Posterior cingulate gyrus (tissue), 11 donors: ENCODE measurements at regions of chr16 and their contacts with region 1.

Region 1: DNA sequence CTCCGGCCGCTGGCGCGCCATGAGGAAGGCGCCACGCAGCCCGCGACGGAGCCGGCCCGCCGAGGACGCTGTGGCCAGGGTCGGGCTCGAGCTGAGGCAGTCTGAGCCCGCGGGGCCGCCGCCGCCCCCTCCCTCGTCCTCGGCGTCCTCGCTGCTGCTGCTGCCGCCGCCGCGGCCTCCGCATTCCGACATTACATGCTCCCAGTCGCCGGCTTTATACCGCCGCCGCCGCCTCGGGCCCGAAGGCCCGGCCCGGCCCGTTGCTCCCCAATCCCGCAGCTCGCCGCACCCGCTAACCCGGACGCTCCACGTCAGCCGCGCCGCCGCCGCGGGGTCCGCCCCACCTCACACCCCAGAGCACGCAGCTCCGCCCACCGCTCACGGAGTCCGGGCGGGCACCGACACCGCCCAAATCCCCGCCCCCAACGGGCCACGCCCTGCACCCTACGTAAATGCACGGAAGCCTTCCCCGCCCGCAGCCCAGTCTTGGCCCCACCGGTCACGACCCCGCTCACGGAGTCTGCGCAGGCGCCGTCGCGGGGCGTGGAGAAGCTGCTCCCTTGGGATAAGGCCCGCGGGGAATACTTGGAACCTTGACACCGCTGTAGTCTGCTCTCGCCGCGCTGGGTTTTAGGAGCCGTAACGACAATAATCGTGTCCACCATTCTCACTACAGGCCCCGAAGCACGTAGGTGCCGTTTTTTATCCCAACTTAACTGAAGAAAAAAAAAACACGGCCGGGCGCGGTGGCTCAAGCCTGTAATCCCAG is at the start of gene TXNDC11:
- DNase-seq: peak; percentile 98 to 100 (median 99)

Region 2: GRCh38 chr16:11675561-11676511 is 66.9 kb before region 1 on chr16:
- intact Hi-C with region 1: loop called (anchors 5 kb)
- DNase-seq: peak in 5 of 10 donors; percentile 38 to 93 (median 85)

Region 3: DNA sequence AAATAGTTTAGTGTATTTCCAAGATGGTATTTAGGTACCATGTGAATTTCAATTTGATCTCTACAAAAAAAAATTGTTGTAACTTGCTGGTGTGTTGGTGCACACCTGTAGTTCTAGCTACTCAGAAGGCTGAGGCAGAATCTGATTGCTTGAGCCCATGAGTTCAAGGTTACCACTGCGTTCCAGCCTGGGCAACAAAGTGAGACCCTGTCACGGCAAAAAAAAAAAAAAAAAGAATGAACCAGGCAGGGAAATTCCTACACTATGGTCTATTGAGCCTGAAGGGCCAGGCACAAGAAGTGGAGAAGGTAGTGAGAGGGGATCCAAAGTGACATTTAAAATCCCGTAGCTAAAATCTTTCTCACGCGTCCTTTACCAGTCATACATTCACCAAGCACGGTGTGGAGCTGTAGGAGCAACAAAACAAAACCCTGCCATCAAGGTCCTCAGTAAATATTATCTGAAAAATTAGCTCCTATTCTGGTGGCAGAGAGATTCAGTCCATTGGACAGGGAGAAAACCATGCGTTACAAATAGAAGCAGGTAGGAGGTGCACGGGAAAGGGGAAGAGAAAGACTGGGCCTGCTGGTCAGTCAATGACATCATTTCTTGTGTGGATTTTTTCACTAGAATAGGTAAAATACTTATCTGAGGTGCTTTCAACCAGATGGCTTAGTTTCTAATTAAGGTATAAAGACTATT is 27.3 kb before region 1 on chr16:
- intact Hi-C with region 1: no loop called
- DNase-seq: no peak

Region 4: DNA sequence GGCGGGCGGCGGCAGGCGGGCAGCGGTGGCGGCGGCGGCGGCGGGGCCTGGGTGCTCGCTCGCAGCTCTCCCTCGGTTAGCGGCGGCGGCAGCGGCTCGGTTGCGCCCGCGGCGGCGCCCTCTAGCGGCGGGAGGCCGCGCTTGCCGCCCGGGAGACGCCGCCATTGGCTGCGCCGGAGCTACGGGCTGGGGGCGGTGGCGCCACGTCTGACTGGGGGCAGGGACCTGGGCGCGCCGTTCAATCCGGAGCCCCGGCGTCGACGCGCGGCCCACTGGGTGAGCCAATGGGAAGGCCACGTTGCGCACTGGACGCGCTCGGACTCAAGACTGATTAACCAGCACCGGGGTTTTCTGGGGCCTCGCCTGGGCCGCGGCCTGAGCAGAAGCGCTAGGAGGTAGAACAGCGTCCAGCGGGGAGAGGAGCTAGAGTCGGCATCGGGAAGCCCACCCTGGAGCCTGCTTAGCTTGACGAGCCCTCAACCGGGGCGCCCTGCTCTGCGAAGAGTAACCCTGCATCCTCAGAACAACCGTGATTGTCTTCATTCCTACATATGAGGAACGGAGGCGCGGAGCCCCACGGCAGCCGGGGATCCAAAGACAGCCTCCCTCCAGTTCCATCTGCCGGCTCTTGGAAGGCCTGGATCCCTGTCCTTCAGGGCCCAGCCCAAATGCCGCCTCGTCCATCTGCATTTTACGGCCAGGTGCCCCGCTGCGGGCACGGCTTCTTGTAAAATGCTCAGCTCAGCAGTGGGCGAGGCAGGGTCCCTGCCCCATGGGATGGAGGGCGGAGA is 54.6 kb after region 1 on chr16 and contains the start of gene ZC3H7A:
- intact Hi-C with region 1: loop called (anchors 2 kb)
- DNase-seq: peak; percentile 90 to 99 (median 96)

Region 5: GRCh38 chr16:11851294-11852091 is 108.8 kb after region 1 on chr16 and contains the start of gene RSL1D1:
- intact Hi-C with region 1: loop called (anchors 2 kb)
- DNase-seq: peak; percentile 79 to 98 (median 86)